Activated T-helper 2 cell treated with anti-CD3 and anti-CD28 coated beads, Interferon-gamma antibody, Interleukin-2, Interleukin-4, amounts not matched to agents 10 μg/mL and 5 μg/mL and 100 μg/mL, durations not matched to agents 14 hours and 24 hours and 36 hours (primary cell): ENCODE measurements at regions of chr2 and their contacts with region 1.

Region 1: DNA sequence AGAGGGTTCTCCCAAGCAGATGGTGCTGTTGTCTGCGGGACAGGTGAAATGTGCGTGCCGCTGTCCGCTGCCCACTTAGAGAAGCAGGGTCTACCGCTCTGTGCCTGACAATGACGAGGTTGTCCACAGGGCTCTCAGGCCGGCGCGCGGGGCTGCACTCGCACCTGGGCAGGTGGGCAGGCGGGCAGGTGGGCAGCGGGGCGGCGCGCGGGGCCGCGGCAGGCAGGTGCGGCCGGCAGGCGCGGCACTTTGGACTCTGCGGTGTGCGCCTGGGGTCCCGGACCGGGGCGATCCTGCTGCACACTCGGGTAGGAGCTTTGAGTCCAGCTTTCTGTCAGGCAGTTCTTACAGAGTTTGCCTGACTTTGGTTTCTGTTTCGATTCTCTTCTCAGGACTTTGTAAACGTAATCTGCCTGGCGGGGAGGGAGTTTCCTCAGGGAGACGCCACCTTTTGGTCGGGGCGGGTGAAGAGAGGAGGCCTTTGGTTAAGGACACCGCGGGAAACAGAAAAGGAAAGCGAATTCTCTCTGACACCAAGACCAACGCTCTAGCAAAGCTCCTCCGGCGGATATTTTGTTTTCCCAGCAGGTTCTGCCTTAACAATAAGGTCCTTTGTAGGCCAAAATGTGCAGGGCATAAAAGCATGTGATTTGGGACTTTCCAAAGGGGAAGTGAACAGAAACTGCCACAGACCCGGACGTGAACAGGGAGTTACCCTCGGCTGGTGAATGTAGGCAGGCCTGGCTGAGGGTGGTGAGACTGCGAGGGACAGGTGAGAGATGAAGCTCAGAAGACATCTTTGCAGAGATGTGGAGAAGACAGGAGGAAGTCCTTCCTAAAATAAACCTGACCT is at the start of gene IFIH1:
- DNase-seq: peak; percentile 76
- H3K4me3 Mint-ChIP-seq: peak within 1 kb of the TSS; percentile 91
- H3K27ac Mint-ChIP-seq: peak within 1 kb of the TSS; percentile 96
- H3K4me1 Mint-ChIP-seq: peaks cover 51% of the 10 kb centered on the region
- H3K27me3 Mint-ChIP-seq: no peaks in the 10 kb centered on the region
- total RNA-seq, gene IFIH1: 14.5 and 16.1 TPM in 2 replicates

Region 2: GRCh38 chr2:161847910-161848309 is 470.6 kb before region 1 on chr2:
- intact Hi-C with region 1: no loop called
- DNase-seq: no peak
- H3K4me3 Mint-ChIP-seq: no peak overlapping the region
- H3K27ac Mint-ChIP-seq: no peak overlapping the region
- H3K4me1 Mint-ChIP-seq: no peaks in the 10 kb centered on the region
- H3K27me3 Mint-ChIP-seq: peaks cover 12% of the 10 kb centered on the region

Region 3: GRCh38 chr2:162013514-162014475 is 304.8 kb before region 1 on chr2:
- intact Hi-C with region 1: loop called (anchors 5 kb)
- DNase-seq: no peak
- H3K4me3 Mint-ChIP-seq: peak overlapping the region; percentile 79
- H3K27ac Mint-ChIP-seq: peak overlapping the region; percentile 87
- H3K4me1 Mint-ChIP-seq: peaks cover 67% of the 10 kb centered on the region
- H3K27me3 Mint-ChIP-seq: no peaks in the 10 kb centered on the region

Region 4: GRCh38 chr2:162343824-162344616 is 25.5 kb after region 1 on chr2 and contains the start of gene GCA:
- intact Hi-C with region 1: loop called (anchors 2 kb)
- DNase-seq: peak; percentile 97
- H3K4me3 Mint-ChIP-seq: peak within 1 kb of the TSS; percentile 89
- H3K27ac Mint-ChIP-seq: peak within 1 kb of the TSS; percentile 54
- H3K4me1 Mint-ChIP-seq: peaks cover 18% of the 10 kb centered on the region
- H3K27me3 Mint-ChIP-seq: peaks cover 10% of the 10 kb centered on the region
- total RNA-seq, gene GCA: 11.2 and 11.7 TPM in 2 replicates